Mammary epithelial cell (primary cell): ENCODE measurements at regions of chr10 and their contacts with region 1.

Region 1: DNA sequence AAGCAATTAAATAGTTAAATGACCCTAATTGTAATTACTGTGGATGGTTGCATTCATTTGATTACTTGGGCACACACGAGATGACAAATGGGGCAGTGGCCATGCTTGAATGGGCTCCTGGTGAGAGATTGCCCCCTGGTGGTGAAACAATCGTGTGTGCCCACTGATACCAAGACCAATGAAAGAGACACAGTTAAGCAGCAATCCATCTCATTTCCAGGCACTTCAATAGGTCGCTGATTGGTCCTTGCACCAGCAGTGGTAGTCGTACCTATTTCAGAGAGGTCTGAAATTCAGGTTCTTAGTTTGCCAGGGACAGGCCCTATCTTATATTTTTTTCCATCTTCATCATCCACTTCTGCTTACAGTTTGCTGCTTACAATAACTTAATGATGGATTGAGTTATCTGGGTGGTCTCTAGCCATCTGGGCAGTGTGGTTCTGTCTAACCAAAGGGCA is 8.3 kb downstream of the PCBD1 start:
- DNase-seq: peak; percentile 54
- H3K4me3 ChIP-seq: no peak overlapping the region
- H3K27ac ChIP-seq: no peak overlapping the region
- H3K4me1 ChIP-seq: no peaks in the 10 kb centered on the region
- H3K27me3 ChIP-seq: no peaks in the 10 kb centered on the region
- CTCF ChIP-seq: peak; percentile 92 to 94

Region 2: GRCh38 chr10:70461215-70461986 is 418.7 kb before region 1 on chr10:
- CTCF ChIA-PET with region 1: no interaction called
- dilution Hi-C with region 1: no loop called
- in situ Hi-C with region 1: no loop called
- intact Hi-C with region 1: loop called (anchors 1 kb)
- DNase-seq: peak; percentile 48
- H3K4me3 ChIP-seq: no peak overlapping the region
- H3K27ac ChIP-seq: no peak overlapping the region
- H3K4me1 ChIP-seq: peaks cover 19% of the 10 kb centered on the region
- H3K27me3 ChIP-seq: peaks cover 3% of the 10 kb centered on the region
- CTCF ChIP-seq: peak; percentile 86 to 88

Region 3: DNA sequence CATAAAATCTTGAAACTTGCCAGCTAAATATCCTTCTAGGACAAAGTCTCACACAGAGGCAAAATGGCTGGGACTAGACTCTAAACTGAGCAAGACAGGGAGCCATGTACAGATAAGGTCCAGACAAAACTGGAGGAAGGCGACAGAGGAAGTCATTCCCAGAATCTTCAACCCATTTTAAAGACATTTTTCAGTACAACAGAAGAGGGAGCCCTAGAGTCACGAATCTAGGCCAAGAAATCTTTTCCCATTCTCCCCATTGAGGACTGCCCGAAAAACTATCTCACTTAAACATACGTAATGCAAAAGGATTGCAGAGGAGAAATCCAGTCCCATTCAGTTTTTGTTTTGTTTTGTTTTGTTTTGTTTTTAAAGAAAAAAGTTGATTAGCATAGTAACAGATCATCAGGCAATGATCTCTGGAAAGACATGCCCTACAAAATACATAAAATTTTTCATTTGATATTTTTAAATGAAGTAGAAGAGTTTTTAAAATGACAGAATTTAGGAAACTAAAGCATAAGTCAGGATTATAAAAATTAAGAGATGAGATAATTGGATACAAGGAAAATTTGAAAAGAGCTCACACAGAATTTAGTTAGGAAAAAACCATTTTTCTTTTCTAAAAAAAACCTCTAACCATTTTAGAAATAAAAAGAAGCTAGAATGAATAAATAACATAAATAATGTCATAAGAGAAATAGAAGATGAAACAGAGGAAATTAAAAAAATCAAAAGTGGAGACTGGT is 260.7 kb before region 1 on chr10:
- CTCF ChIA-PET with region 1: no interaction called
- dilution Hi-C with region 1: no loop called
- in situ Hi-C with region 1: no loop called
- intact Hi-C with region 1: loop called (anchors 1 kb)
- DNase-seq: peak; percentile 44
- H3K4me3 ChIP-seq: no peak overlapping the region
- H3K27ac ChIP-seq: no peak overlapping the region
- H3K4me1 ChIP-seq: no peaks in the 10 kb centered on the region
- H3K27me3 ChIP-seq: peaks cover 4% of the 10 kb centered on the region
- CTCF ChIP-seq: peak; percentile 41 to 50

Region 4: GRCh38 chr10:70808887-70809611 is 71.1 kb before region 1 on chr10:
- CTCF ChIA-PET with region 1: no interaction called
- dilution Hi-C with region 1: loop called (anchors 5 kb)
- in situ Hi-C with region 1: no loop called
- intact Hi-C with region 1: no loop called
- DNase-seq: peak; percentile 39
- H3K4me3 ChIP-seq: no peak overlapping the region
- H3K27ac ChIP-seq: no peak overlapping the region
- H3K4me1 ChIP-seq: peaks cover 42% of the 10 kb centered on the region
- H3K27me3 ChIP-seq: no peaks in the 10 kb centered on the region
- CTCF ChIP-seq: no peak